ENCODE measurements at regions of chr17 and their contacts with region 1.

Region 1: GRCh38 chr17:34361478-34362061 is 1.5 kb downstream of the CCL1 start:
- DNase-seq: peak; percentile 72
- H3K4me3 ChIP-seq: no peak overlapping the region
- H3K27ac ChIP-seq: no peak overlapping the region
- H3K27me3 ChIP-seq: peaks cover 9% of the 10 kb centered on the region
- CTCF ChIP-seq: peak; percentile 100

Region 2: DNA sequence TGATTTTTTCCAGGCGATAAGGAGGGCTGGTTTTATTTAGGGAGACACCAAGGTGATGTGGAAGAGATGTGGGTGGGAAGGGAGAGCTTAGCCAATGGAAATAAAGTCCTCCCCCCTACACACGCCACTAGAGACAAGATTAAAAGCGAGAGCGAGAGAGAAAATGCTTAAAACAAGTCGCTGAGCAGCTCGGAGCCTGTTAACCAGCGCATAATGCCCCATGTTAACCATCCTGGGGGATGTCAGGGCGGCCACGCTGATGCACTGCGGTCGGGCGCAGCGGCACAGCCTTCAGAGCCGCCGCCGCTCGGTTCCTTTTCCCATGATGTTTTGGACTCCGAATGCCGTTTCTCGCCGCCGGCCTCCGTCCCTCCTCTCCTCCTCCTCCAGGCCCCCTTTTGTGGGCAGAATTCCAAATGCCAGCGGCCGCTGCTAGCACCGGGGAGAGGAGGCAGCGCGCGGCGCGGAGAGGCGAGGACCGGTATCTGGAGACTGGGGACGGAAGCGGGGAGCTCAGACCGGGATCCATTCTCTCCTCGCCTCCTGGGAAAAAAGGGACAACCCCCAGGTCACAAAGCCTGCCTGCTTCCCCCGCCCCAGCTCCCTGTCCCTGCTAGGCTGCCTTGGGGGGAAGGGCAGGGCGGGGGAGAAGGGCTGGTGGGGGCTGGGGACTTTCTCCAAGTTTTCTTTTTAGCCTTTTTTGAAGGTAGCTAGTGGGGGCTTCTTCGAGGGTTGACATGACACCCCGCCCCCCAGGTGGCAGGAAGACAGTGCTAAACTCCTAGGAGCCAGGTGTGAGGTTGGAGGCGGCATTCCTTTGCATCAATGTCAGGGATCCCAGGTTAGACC is 204.6 kb before region 1 on chr17:
- CTCF ChIA-PET with region 1: interaction called, 39 read pairs
- POLR2A ChIA-PET with region 1: no interaction called
- DNase-seq: no peak
- H3K4me3 ChIP-seq: no peak overlapping the region
- H3K27ac ChIP-seq: no peak overlapping the region
- H3K27me3 ChIP-seq: peaks cover 60% of the 10 kb centered on the region
- CTCF ChIP-seq: no peak

Region 3: GRCh38 chr17:34207572-34207971 is 154.0 kb before region 1 on chr17:
- CTCF ChIA-PET with region 1: interaction called, 849 read pairs
- POLR2A ChIA-PET with region 1: no interaction called
- DNase-seq: no peak
- H3K4me3 ChIP-seq: no peak overlapping the region
- H3K27ac ChIP-seq: no peak overlapping the region
- H3K27me3 ChIP-seq: peaks cover 1% of the 10 kb centered on the region
- CTCF ChIP-seq: no peak

Region 4: DNA sequence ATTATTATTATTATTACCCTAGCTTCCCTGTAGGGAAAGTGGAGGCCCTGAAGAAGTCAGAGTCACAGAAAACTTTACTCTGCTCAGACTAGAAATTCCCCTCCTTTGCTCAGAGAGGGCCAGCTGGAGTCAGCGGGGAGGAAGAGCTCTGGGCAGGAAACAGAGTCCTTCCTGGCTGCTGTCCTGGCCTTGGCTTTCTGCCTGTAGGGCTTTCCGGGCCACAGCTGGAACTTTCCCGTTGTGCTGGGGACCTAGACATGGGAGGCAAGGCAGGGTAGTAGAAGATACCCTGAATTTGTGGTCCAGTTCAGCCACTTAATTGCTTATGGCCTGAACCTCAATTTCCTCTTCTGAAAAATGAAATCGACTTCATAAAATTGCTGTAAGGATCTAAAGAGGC is 120.5 kb before region 1 on chr17:
- CTCF ChIA-PET with region 1: interaction called, 38 read pairs
- POLR2A ChIA-PET with region 1: no interaction called
- DNase-seq: no peak
- H3K4me3 ChIP-seq: no peak overlapping the region
- H3K27ac ChIP-seq: no peak overlapping the region
- H3K27me3 ChIP-seq: no peaks in the 10 kb centered on the region
- CTCF ChIP-seq: no peak

Region 5: DNA sequence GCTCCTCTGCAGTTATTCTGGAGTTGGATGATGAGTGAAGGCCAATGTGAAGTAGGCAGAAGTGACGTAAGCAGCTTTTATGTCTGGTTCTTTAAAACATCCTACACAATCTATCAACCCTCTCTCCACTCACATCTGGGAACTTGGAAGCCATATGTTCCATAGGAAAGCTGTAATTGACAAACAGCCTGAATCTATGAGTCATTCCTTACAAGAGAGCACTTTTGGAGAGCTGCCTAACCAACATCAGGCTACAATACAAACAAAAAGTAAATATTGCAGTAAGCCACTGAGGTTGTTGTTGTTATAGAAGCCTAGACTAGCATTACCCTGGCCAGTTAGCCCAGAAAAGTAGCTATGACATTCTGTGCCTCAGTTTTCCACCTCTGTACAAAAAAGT is 85.7 kb before region 1 on chr17:
- CTCF ChIA-PET with region 1: interaction called, 73 read pairs
- POLR2A ChIA-PET with region 1: no interaction called
- DNase-seq: peak; percentile 95
- H3K4me3 ChIP-seq: no peak overlapping the region
- H3K27ac ChIP-seq: no peak overlapping the region
- H3K27me3 ChIP-seq: peaks cover 2% of the 10 kb centered on the region
- CTCF ChIP-seq: no peak

Region 6: DNA sequence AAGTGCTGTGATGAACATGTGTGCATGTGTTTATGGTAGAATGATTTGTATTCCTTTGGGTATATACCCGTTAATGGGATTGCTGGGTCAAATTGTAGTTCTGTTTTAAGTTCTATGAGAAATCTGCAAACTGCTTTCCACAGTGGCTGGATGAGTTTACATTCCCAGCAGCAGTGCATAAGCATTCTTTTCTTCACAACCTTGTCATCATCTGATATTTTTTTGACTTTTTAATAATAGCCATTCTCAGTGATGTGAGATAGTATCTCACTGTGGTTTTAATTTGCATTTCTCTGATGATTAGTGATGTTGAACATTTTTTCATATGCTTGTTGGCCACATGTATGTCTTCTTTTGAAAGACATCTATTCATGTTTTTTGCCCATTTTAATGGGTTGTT is 23.9 kb before region 1 on chr17:
- CTCF ChIA-PET with region 1: interaction called, 80 read pairs
- POLR2A ChIA-PET with region 1: no interaction called
- DNase-seq: no peak
- H3K4me3 ChIP-seq: no peak overlapping the region
- H3K27ac ChIP-seq: no peak overlapping the region
- H3K27me3 ChIP-seq: no peaks in the 10 kb centered on the region
- CTCF ChIP-seq: no peak

Region 7: DNA sequence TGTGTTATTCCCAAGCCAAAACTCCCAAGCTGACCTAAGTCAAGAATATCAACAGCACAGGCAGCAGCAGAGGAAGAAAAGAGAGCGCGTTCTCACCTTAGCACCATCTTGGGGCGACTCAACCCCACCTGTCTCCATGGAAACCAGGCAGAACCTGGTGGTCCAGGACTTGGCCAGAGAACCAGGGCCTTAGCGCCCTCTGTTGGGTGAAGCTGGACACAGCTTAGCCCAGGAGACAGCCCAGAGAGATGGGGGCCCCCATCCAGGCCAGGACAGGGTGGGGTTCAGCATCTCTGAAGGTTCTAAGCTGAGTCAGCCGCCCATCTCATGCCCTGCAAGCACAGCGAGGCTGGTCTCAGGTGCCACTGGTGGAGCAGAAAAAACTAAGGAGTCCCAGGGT is 157.7 kb after region 1 on chr17:
- CTCF ChIA-PET with region 1: no interaction called
- POLR2A ChIA-PET with region 1: no interaction called
- DNase-seq: no peak
- H3K4me3 ChIP-seq: no peak overlapping the region
- H3K27ac ChIP-seq: no peak overlapping the region
- H3K27me3 ChIP-seq: peaks cover 2% of the 10 kb centered on the region
- CTCF ChIP-seq: peak; percentile 27; the same call in 1 of the 2 replicates